AG04450 (cell line): ENCODE measurements at regions of chr9 and their contacts with region 1.

Region 1: GRCh38 chr9:120730661-120731514 is 16.6 kb upstream of the MEGF9 start:
- DNase-seq: peak; percentile 91
- H3K4me3 ChIP-seq: no peak overlapping the region
- H3K27ac ChIP-seq: peak overlapping the region; percentile 69
- H3K27me3 ChIP-seq: no peaks in the 10 kb centered on the region
- CTCF ChIP-seq: no peak

Region 2: DNA sequence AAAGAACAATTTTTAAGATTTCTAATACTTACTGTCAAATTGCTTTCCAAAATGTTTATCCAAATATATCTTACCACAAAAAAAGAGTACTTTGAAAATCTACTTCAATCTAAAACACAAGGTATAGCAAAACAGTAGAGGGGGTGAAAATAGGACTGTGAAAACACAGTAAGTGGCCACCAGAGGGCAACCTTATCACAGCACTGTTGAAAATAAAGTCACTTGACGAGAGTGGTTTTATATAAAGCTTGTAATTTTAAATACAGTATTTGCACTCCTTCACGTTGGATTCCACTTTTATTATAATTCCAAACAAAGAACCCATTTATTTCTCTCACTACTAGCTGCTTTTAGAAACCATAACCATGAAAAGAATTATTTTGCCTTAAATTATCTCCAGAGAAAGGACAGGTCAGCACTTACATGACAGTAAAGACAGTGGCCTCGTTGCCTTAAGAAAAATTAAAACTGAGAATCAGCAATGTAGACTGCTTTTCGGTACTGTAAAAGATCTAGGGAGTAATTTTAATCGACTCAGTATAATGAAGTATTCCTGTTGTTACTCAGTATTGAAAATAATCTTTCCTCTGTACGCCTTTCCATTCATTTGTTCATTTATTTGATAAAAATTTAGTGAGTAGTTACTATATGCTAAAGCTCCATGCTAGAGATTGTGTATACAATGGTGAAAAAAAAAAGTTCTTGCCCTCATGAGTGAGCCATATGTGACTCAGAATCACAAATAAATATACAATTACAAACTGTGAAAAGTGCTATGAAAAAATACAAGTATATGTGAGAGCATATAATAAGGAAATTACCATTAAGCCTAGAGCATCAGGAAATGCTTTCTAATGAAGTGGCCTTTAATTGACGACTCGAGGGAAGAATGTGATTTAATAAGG is 110.9 kb before region 1 on chr9:
- CTCF ChIA-PET with region 1: interaction called, 17 read pairs
- POLR2A ChIA-PET with region 1: no interaction called
- DNase-seq: peak; percentile 48
- H3K4me3 ChIP-seq: no peak overlapping the region
- H3K27ac ChIP-seq: no peak overlapping the region
- H3K27me3 ChIP-seq: no peaks in the 10 kb centered on the region
- CTCF ChIP-seq: peak; percentile 82

Region 3: DNA sequence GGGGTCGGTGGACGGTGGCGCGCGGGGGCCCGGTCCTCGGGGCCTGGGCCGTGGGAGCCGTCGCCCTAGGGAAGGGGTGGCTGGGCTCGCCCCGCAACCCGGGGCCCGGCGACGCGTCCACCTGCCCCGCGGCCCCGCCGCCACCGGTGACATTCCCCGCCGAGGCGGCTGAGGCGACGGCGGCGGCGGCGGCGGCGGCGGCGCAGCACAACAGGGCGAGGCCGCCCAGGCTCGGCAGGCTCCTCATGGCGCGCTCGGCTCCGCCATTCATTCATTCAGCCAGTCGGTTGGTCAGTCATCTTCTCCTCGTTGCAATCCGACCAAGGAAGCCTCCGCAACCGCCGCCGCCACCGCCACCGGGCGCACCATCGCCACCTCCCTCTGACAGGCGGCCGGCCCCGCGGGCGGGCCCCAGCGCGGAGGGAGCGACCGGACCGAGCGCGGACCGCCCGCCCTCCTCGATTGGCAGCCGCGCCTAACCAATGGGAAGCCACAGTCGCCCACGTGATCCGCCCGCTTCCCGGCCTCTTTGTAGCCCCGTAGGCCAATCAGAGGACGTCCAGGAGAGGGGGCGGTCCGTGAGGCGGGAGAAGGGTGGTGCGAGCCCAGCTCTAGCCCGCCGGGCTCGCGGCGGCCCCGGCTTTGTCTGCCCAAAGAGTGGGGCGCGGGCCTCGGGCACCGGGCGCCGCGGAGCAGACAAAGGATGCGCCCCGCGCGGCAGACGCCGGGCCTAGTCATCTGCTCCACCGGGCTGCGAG is 16.6 kb before region 1 on chr9 and contains the start of gene MEGF9:
- CTCF ChIA-PET with region 1: interaction called, 6 read pairs
- POLR2A ChIA-PET with region 1: interaction called, 31 read pairs
- DNase-seq: peak; percentile 91
- H3K4me3 ChIP-seq: peak within 1 kb of the TSS; percentile 77
- H3K27ac ChIP-seq: peak within 1 kb of the TSS; percentile 49
- H3K27me3 ChIP-seq: no peaks in the 10 kb centered on the region
- CTCF ChIP-seq: no peak
- polyA plus RNA-seq, gene MEGF9: 11.4 and 12.9 TPM in 2 replicates

Region 4: DNA sequence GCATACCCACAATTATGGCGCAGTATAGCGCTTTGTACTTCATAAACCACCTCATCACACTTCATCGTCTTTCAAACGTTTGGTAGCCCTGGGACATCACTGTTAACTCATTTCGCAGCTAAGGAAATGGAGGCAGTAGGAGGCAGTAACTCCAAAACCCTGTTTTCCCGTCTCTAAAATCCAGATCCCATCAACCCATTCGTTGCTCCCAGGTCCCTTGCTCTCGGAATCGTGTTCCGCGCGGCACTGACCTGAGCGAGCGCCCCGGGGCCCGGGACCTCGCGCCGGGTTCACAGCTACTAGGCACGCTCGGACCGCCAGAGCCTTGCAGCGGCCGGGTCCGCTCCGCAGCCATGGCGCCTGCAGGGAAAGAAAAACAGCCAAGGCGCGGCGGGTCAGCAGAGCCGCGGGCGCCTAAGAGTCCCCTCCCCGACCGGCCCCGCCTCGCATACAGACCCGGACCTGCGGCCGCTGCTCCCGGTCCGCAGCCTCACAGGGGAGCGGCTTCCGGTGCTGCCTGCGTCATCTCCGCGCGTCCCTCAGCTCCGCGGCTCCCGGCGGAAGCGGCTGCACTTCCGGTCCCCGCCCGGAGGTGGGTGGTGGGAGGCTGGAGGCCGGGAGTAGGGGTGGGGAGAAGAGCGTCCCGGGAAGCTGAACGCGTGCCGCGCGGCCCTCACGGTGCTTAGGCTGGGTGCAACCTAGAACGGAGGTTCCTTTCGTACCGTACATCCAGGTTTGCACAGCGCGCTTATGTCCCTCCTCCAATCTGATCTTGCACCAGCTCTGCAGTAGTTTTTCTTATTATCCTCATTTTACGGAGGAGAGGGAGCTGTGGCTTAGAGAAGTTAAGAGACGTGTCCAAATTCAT is 62.2 kb after region 1 on chr9 and contains the start of gene FBXW2:
- CTCF ChIA-PET with region 1: no interaction called
- POLR2A ChIA-PET with region 1: interaction called, 11 read pairs
- DNase-seq: peak; percentile 66
- H3K4me3 ChIP-seq: peak within 1 kb of the TSS; percentile 92
- H3K27ac ChIP-seq: peak within 1 kb of the TSS; percentile 23
- H3K27me3 ChIP-seq: no peaks in the 10 kb centered on the region
- CTCF ChIP-seq: no peak
- polyA plus RNA-seq, gene FBXW2: 57.7 and 69.0 TPM in 2 replicates